ENCODE measurements at regions of chr3 and their contacts with region 1.

Region 1: DNA sequence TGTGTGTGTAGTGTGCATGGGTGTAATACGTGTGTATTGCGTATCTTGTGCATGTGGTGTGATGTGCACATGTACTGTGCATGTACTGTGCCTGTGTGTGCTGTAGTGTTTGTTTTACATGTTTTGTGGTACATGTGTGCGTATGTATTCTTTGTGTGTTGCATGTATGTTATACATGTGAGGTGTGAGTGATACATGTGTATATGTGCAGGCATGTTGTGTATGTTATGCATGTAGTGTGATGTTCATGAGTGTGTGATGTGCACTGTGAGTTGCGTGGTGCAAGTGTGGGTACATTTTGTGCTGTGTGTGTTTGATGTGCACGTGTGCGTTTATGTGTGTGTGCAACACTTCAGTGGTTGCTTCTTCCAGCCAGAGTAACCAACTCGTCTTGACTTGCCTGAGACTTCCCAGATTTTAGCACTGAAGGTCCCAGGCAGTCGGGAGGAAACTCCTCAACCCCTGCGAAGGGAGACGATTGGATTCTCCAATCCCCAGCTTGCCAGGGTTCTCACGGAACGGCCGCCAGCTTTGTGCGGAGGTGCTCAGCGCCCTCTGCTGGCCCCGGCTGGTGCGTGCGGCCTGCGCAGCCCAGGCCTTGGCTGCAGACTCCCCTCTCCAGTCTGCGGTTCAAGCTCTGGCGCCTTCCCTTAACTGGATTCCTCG is 3.6 kb downstream of the GALNT15 start:
- DNase-seq: peak; percentile 88

Region 2: GRCh38 chr3:16048435-16049318 is 129.4 kb before region 1 on chr3:
- CTCF ChIA-PET with region 1: interaction called, 15 read pairs
- POLR2A ChIA-PET with region 1: no interaction called
- DNase-seq: peak; percentile 68

Measured in HEK293T (cell line).